Psoas muscle (tissue), 8 donors: ENCODE measurements at regions of chr2 and their contacts with region 1.

Region 1: GRCh38 chr2:41966431-41966893 is 81.4 kb upstream of the PKDCC start:
- DNase-seq: peak; percentile 92 to 94
- ATAC-seq: peak; percentile 91 to 95 (median 92)
- H3K4me3 ChIP-seq: no peak overlapping the region
- H3K27ac ChIP-seq: peak overlapping the region; percentile 64
- H3K4me1 ChIP-seq: peaks cover 28% of the 10 kb centered on the region
- H3K27me3 ChIP-seq: no peaks in the 10 kb centered on the region
- CTCF ChIP-seq: no peak

Region 2: DNA sequence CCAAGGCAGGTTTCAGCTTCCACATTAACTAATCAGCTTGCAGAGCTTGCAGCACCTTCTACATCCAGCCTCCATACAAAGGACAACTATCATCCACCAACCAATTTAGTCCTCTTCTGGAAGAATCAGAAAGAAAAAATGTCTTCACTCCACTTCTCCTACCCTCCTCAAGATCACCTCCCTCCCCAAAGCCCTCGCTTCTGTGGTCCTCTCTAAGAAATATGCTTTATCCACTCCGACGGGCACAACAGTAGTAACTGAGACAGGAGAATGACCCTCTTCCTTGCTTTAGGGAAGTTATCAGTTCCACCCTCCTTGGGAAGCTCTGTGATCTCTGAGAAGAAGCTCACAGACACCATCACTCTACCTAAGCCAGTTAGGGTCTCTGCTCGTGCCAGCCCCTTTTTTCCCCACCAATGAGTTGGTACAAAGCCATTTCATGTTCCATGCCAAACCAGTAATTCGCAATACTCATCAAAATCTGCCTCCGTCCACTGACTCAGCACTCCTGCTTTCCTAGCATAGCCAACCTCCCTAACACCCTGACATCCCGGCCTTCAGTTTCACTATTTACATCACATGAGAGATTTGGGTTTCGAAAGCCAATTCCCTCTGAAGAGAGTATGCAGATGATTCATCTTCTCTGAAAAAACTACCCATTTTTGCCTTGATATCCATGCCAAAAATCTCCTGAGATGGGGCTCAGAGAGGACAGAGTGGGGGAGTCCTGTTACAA is 32.7 kb before region 1 on chr2:
- intact Hi-C with region 1: loop called in 1 of 2 experiments (anchors 5 kb)
- DNase-seq: no peak
- ATAC-seq: peak in 2 of 4 donors; percentile 10 to 32
- H3K4me3 ChIP-seq: no peak overlapping the region
- H3K27ac ChIP-seq: peak overlapping the region; percentile 36
- H3K4me1 ChIP-seq: peaks cover 32% of the 10 kb centered on the region
- H3K27me3 ChIP-seq: no peaks in the 10 kb centered on the region
- CTCF ChIP-seq: no peak

Region 3: DNA sequence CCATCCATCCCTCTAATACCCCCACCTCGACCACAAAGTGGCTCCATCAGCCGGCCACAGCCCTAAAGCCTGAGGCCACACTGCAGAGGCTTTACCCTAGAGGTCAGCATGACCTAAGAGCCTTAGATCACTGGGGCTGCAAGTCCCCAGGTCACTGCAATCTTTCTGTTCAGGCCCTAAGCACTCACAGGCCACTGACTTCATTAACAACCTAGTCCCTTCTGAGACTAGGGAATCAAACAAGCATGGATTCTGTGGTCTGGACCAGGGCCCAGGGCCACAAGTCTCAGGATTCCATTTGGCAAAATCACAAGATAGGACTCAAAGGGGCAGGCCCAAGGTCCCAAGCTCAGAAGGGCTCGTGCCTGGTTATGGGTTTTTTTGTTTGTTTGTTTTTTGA is 44.3 kb after region 1 on chr2:
- intact Hi-C with region 1: no loop called
- DNase-seq: no peak
- ATAC-seq: peak in 1 of 4 donors; percentile 38
- H3K4me3 ChIP-seq: no peak overlapping the region
- H3K27ac ChIP-seq: no peak overlapping the region
- H3K4me1 ChIP-seq: no peaks in the 10 kb centered on the region
- H3K27me3 ChIP-seq: no peaks in the 10 kb centered on the region
- CTCF ChIP-seq: no peak

Region 4: DNA sequence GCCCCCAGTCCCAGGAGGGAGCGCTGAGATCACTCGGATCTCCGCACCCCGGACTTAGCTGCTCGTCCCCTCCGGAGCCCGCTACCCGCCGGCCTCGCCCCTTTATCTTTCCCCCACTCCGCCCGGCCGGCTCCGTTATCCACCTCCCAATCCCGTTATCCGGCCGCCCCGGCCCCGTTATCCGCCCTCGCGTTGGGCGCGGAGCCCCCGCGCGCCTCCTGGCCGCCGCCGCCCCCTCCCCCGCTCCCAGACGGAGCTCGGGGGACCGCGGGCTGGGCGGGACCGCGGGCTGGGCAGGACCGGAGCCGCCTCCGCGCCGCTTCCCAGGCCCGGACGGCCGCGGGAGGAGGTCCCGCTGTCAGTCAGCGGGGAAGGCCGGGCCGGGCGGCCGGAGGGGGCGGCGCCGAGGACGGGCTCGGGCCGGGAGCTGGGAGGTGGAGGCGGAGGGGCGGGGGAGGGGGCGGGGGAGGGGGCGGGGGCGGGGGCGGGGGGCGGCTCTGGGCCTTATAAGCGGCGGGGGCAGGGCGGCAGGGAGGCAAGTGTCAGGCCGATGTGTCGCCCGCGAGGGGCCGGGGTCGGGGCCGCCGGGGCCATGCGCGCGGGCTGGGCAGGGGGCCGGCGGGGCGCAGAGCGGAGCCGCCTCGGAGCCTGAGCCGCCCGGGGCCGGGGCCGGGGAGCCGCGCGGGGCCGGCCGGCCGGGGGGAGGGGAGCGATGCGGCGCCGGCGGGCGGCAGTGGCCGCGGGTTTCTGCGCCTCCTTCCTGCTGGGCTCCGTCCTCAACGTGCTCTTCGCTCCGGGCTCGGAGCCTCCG is 81.2 kb after region 1 on chr2 and contains the start of gene PKDCC:
- intact Hi-C with region 1: loop called in 1 of 2 experiments (anchors 5 kb)
- DNase-seq: peak; percentile 89 to 94
- ATAC-seq: peak; percentile 77 to 84 (median 80)
- H3K4me3 ChIP-seq: peak within 1 kb of the TSS; percentile 95
- H3K27ac ChIP-seq: peak within 1 kb of the TSS; percentile 94
- H3K4me1 ChIP-seq: peaks cover 34% of the 10 kb centered on the region
- H3K27me3 ChIP-seq: no peaks in the 10 kb centered on the region
- CTCF ChIP-seq: no peak
- total RNA-seq, gene PKDCC: 45.6 to 159 (median 111) TPM

Region 5: DNA sequence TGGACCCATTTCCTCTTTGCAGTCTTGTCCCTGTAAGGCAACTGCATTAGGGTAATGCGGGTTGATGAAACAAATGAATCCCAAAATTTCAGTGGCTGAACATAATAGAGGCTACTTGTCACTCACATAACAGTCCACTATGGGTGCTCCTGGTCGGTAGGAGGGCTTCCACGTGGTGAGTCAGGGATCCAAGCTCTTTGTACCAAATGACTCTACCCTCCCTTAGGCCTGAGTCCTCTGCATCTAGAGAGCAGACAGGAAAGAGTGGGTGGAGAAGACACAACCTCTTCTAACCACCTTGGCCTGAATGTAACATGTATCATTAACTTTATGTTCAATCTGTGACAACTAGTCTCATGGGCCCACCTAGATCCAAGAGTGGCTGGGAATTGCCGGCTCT is 912.1 kb after region 1 on chr2:
- intact Hi-C with region 1: no loop called
- DNase-seq: no peak
- ATAC-seq: no peak
- H3K4me3 ChIP-seq: no peak overlapping the region
- H3K27ac ChIP-seq: peak overlapping the region; percentile 39
- H3K4me1 ChIP-seq: peaks cover 3% of the 10 kb centered on the region
- H3K27me3 ChIP-seq: no peaks in the 10 kb centered on the region
- CTCF ChIP-seq: no peak